WTC11 (cell line): ENCODE measurements at regions of chr20 and their contacts with region 1.

Region 1: DNA sequence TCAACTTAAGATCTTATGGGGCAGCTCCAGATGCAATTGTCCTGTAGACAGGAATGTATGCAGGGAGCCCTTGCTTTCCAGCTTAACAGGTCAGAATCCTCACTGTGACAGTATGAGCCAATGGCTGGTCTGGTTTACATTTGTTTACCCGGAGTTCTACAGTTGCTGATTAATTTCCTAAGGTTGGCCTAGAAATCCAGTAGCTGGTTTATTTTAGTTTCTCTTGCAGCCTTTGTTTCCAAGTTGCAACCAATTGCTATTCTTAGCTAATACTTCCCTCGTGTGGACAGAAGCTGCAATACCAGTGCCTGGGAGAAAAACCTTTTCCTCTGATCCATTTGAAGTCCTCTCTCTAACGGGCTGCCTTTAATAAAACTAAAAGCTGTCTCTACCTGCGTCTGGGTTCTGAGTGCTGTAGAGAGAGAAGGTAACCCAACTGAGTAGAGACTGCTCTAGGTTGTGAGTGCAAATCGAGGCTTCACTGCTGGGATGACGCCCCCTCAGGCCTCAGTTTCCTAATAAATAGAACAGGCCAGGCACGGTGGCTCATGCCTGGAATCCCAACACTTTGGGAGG is 45.9 kb downstream of the ZNF217 start:
- DNase-seq: peak; percentile 39
- ATAC-seq: peak; percentile 87
- H3K4me3 Mint-ChIP-seq: no peak overlapping the region
- H3K27ac Mint-ChIP-seq: peak overlapping the region; percentile 79; the same call in 1 of the 2 replicates
- H3K4me1 Mint-ChIP-seq: peaks cover 4% of the 10 kb centered on the region
- H3K27me3 Mint-ChIP-seq: no peaks in the 10 kb centered on the region
- CTCF ChIP-seq: peak; percentile 45

Region 2: DNA sequence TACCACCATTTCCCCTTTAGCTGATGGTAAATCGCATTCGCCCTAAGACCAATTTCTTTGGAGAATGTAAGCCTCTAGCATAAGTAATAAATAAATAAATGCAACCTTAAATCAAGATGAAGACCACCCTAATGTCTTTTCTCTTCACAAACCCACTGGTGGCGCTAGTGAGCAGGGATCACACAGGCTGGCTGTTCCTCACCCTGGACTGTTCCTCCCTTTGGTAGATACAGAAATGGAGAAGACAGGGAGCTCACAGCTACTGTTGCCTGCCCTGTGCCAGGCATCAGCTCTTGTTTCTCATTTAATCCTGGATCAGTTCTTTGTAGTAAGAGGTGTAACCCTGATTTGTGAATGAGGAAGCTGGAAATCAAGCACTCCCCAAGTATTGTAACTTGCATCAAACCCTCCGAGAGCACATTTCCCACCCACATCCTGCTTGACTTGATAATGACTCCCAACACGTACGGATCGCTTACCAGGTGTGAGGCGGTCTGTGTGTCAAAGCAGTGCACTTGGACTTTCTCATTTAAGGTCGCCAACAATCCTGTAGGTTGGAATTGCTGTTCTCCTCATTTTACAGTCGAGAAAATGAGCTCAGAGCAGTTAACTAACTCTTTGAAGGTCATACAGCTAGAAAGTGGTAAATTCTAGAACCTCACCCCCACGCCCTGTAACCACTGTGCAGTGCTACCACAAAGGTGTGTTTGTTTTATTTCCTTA is 339.5 kb before region 1 on chr20:
- CTCF ChIA-PET with region 1: interaction called, 26 read pairs
- POLR2A ChIA-PET with region 1: no interaction called
- DNase-seq: peak; percentile 81
- ATAC-seq: peak; percentile 88
- H3K4me3 Mint-ChIP-seq: no peak overlapping the region
- H3K27ac Mint-ChIP-seq: no peak overlapping the region
- H3K4me1 Mint-ChIP-seq: peaks cover 31% of the 10 kb centered on the region
- H3K27me3 Mint-ChIP-seq: no peaks in the 10 kb centered on the region
- CTCF ChIP-seq: peak; percentile 63; the same call in 1 of the 2 replicates

Region 3: GRCh38 chr20:53216856-53217576 is 330.7 kb before region 1 on chr20:
- CTCF ChIA-PET with region 1: interaction called, 12 read pairs
- POLR2A ChIA-PET with region 1: no interaction called
- DNase-seq: peak; percentile 95
- ATAC-seq: peak; percentile 92
- H3K4me3 Mint-ChIP-seq: peak overlapping the region; percentile 49; the same call in 1 of the 2 replicates
- H3K27ac Mint-ChIP-seq: no peak overlapping the region; the same call in 1 of the 2 replicates
- H3K4me1 Mint-ChIP-seq: peaks cover 38% of the 10 kb centered on the region
- H3K27me3 Mint-ChIP-seq: peaks cover 22% of the 10 kb centered on the region
- CTCF ChIP-seq: peak; percentile 88

Region 4: DNA sequence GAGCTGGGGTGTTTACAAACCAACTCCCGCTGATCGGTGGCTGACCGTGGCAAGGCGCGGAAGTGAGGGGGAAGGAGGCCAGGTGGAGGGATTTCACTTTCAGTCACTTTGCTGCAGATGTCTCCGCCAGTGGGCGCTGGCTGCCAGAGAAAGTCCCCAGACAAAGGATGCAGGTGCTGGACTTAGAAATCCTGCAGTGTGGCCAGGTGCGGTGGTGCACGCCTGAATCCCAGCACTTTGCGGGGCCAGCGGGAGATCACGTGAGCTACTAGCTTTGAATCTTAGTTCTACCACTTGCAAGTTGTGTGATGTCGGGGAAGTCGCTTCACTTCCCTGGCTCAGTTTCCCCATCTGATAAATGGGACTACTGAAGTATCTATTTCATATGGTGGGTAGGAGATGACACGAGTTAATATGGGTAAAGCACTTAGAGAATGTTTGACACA is 134.5 kb before region 1 on chr20:
- CTCF ChIA-PET with region 1: interaction called, 63 read pairs
- POLR2A ChIA-PET with region 1: no interaction called
- DNase-seq: peak; percentile 88
- ATAC-seq: peak; percentile 93
- H3K4me3 Mint-ChIP-seq: peak overlapping the region; percentile 54
- H3K27ac Mint-ChIP-seq: no peak overlapping the region
- H3K4me1 Mint-ChIP-seq: peaks cover 17% of the 10 kb centered on the region
- H3K27me3 Mint-ChIP-seq: no peaks in the 10 kb centered on the region
- CTCF ChIP-seq: peak; percentile 42; the same call in 1 of the 2 replicates

Region 5: GRCh38 chr20:53535878-53536277 is 11.9 kb before region 1 on chr20:
- CTCF ChIA-PET with region 1: interaction called, 10 read pairs
- POLR2A ChIA-PET with region 1: no interaction called
- DNase-seq: no peak
- ATAC-seq: no peak
- H3K4me3 Mint-ChIP-seq: no peak overlapping the region
- H3K27ac Mint-ChIP-seq: peak overlapping the region; percentile 54
- H3K4me1 Mint-ChIP-seq: 0 out of 2 replicates have a peak, but pooled peaks cover 2% of the 10 kb centered on the region
- H3K27me3 Mint-ChIP-seq: no peaks in the 10 kb centered on the region; the same call in 1 of the 2 replicates
- CTCF ChIP-seq: no peak

Region 6: DNA sequence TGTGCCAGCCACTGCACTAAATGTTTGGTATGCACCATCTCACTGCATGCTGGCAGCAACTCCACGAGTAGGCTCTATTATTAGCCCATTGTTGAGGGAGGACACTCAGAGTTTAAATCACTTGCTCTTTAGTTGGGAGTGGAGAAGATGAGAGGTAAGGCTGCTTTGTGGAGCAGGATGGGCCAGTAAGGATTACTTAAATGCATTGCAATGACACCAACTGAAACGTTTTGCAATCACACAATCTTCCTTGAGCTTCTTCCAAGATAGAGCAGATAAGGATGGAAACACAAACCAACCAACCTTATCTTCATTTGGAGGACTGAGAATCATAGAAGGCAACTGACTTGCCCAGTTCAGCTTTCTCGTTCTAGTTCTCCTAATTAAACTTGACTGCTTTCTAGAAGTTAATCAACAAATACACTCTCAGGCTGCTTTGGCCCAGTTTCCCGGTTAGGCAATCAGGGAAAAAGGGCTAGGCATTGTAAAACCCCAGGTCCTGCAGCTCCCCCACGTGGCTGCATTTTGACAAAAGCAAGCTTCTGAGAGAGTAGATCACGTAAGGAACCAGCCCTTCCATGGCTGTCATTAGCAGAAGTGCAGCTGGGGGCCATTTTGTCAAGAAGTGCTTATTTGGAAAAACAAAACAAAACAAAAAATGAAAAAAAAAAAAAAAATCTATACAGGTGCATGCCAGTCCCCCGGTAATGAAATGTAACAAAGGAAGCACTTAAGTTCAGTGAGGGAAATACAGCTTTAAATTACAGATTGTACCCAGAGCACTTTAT is 392.0 kb after region 1 on chr20:
- CTCF ChIA-PET with region 1: interaction called, 21 read pairs
- POLR2A ChIA-PET with region 1: no interaction called
- DNase-seq: peak; percentile 91
- ATAC-seq: peak; percentile 77
- H3K4me3 Mint-ChIP-seq: peak overlapping the region; percentile 59
- H3K27ac Mint-ChIP-seq: peak overlapping the region; percentile 54
- H3K4me1 Mint-ChIP-seq: peaks cover 70% of the 10 kb centered on the region
- H3K27me3 Mint-ChIP-seq: no peaks in the 10 kb centered on the region
- CTCF ChIP-seq: peak; percentile 58